Heart left ventricle (tissue), 16 donors: ENCODE measurements at regions of chr5 and their contacts with region 1.

Region 1: DNA sequence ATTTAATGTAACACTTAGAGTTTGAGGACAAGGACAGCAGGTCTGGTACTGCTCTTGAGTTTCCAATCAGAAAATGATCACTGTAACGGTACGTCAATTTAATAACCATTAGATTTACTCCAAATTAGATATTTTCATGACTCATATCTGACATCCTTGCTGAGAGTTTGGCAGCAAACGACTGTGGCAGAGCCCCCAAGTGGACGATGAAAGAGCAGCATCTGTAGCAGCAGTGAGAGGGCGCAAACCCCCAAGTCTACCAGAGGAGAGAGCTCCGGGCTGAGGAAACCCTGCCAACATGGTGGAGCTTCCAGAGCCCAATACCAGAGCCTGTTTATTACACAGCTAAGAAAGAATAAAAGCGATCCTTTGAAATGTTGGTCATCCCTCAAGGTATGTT is 73.2 kb upstream of the EPB41L4A start:
- DNase-seq: peak in 3 of 5 donors; percentile 47 to 63 (median 60)
- ATAC-seq: peak in 2 of 4 donors; percentile 87 to 90
- H3K4me3 ChIP-seq: no peak overlapping the region
- H3K27ac ChIP-seq: no peak overlapping the region
- H3K4me1 ChIP-seq: no peaks in the 10 kb centered on the region
- H3K27me3 ChIP-seq: no peaks in the 10 kb centered on the region
- CTCF ChIP-seq: peak; percentile 15 to 79 (median 54)
- POLR2A ChIP-seq: no peak

Region 2: GRCh38 chr5:112174959-112175594 is 317.2 kb before region 1 on chr5:
- intact Hi-C with region 1: loop called in 1 of 10 experiments (anchors 5 kb)
- DNase-seq: peak in 2 of 5 donors; percentile 16 to 26
- ATAC-seq: peak in 3 of 4 donors; percentile 64 to 74 (median 72)
- H3K4me3 ChIP-seq: no peak overlapping the region
- H3K27ac ChIP-seq: no peak overlapping the region
- H3K4me1 ChIP-seq: no peaks in the 10 kb centered on the region
- H3K27me3 ChIP-seq: no peaks in the 10 kb centered on the region
- CTCF ChIP-seq: peak; percentile 48 to 76 (median 70)
- POLR2A ChIP-seq: no peak

Region 3: GRCh38 chr5:112253478-112254250 is 238.6 kb before region 1 on chr5:
- intact Hi-C with region 1: no loop called
- DNase-seq: peak in 4 of 5 donors; percentile 37 to 76 (median 44)
- ATAC-seq: peak; percentile 91 to 98 (median 96)
- H3K4me3 ChIP-seq: no peak overlapping the region
- H3K27ac ChIP-seq: peak overlapping the region in 11 of 12 donors; percentile 14 to 58 (median 32)
- H3K4me1 ChIP-seq: peaks cover 0 to 31% (median 11%) of the 10 kb centered on the region in 12 donors
- H3K27me3 ChIP-seq: no peaks in the 10 kb centered on the region
- CTCF ChIP-seq: no peak
- POLR2A ChIP-seq: no peak

Region 4: GRCh38 chr5:112902561-112902960 is 410.3 kb after region 1 on chr5:
- intact Hi-C with region 1: no loop called
- DNase-seq: no peak
- ATAC-seq: no peak
- H3K4me3 ChIP-seq: no peak overlapping the region
- H3K27ac ChIP-seq: no peak overlapping the region
- H3K4me1 ChIP-seq: peaks cover 0 to 37% (median 13%) of the 10 kb centered on the region in 12 donors
- H3K27me3 ChIP-seq: no peaks in the 10 kb centered on the region
- CTCF ChIP-seq: no peak
- POLR2A ChIP-seq: no peak

Region 5: DNA sequence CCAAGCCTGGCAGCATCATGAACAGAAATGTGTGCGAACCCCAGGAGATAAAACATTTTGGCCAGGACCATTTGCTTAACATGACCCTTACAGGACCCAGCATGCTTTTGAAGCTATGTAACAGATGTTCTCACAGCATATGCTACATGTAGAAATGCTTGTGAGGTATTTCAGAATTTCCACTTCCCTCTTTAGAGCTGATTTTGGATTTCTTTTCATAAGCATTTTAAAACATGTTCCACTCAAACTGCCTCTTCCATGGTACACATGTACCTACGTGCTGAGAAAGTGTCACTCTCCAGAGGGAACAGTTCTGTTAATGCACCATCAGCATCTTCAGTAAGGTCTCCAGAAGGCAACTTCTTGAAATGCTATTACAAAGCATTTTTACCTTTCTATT is 958.2 kb after region 1 on chr5:
- intact Hi-C with region 1: no loop called
- DNase-seq: no peak
- ATAC-seq: no peak
- H3K4me3 ChIP-seq: no peak overlapping the region
- H3K27ac ChIP-seq: no peak overlapping the region
- H3K4me1 ChIP-seq: peaks cover 0 to 10% (median 0%) of the 10 kb centered on the region in 12 donors
- H3K27me3 ChIP-seq: no peaks in the 10 kb centered on the region
- CTCF ChIP-seq: no peak
- POLR2A ChIP-seq: no peak